Heart left ventricle (tissue), 16 donors: ENCODE measurements at regions of chr5 and their contacts with region 1.

Region 1: DNA sequence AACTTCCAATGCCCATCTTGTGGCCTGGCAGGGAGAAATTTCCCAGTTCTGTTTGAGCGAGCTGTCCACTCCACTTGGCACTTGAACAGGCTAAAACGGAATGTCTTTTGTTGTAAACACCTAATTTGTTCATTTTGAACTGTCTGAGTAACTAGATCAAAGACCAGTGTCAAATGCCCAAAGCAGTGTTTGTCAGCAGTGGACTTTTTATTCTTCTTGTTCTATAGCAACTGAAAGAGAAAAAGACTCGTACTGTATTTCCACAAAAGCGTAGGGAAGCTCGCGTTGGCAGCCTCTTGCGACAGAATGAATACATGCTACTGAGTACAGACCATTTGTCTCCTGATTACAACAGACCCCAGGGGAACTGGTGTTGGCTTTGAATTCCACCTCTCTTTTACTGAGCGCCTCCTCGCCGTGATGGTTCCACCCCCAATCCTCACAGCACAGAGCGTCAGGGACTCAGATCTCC is 601.8 kb upstream of the ZNF608 start:
- DNase-seq: peak in 4 of 5 donors; percentile 25 to 51 (median 32)
- ATAC-seq: peak in 3 of 4 donors; percentile 65 to 87 (median 85)
- H3K4me3 ChIP-seq: peak overlapping the region in 4 of 12 donors; percentile 10 to 35 (median 26)
- H3K27ac ChIP-seq: peak overlapping the region in 1 of 12 donors; percentile 6
- H3K4me1 ChIP-seq: peaks cover 0 to 22% (median 12%) of the 10 kb centered on the region in 12 donors
- H3K27me3 ChIP-seq: no peaks in the 10 kb centered on the region
- CTCF ChIP-seq: no peak
- POLR2A ChIP-seq: no peak

Region 2: GRCh38 chr5:124839371-124839998 is 508.8 kb before region 1 on chr5:
- intact Hi-C with region 1: loop called in 1 of 10 experiments (anchors 10 kb)
- DNase-seq: no peak
- ATAC-seq: no peak
- H3K4me3 ChIP-seq: no peak overlapping the region
- H3K27ac ChIP-seq: no peak overlapping the region
- H3K4me1 ChIP-seq: peaks cover 0 to 6% (median 0%) of the 10 kb centered on the region in 12 donors
- H3K27me3 ChIP-seq: no peaks in the 10 kb centered on the region
- CTCF ChIP-seq: no peak
- POLR2A ChIP-seq: no peak

Region 3: DNA sequence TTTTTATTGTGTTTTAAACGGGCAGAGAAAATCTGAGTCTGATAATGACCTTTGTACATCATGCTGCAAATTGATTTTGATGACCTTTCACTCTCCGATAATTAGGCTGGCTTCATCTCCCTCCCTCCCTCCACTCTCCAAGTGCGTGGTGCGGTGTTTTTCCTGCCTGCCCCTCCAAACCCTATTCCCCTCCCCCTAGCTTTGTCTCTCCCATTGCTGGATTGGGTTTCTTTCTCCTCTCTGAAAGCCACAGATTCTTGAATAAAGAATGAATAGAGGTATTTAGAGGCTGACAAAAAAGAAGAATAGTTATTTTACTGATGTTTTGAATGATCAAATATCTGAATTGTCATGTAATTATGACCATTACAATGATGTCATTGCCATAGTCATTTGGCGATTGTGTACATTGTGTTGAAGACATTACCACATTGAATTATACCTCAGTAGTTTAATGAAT is 30.7 kb before region 1 on chr5:
- intact Hi-C with region 1: no loop called
- DNase-seq: no peak
- ATAC-seq: no peak
- H3K4me3 ChIP-seq: no peak overlapping the region
- H3K27ac ChIP-seq: no peak overlapping the region
- H3K4me1 ChIP-seq: no peaks in the 10 kb centered on the region
- H3K27me3 ChIP-seq: no peaks in the 10 kb centered on the region
- CTCF ChIP-seq: no peak
- POLR2A ChIP-seq: no peak